Activated CD4-positive, alpha-beta memory T cell treated with anti-CD3 and anti-CD28 coated beads for 36 hours (primary cell): ENCODE measurements at regions of chr17 and their contacts with region 1.

Region 1: DNA sequence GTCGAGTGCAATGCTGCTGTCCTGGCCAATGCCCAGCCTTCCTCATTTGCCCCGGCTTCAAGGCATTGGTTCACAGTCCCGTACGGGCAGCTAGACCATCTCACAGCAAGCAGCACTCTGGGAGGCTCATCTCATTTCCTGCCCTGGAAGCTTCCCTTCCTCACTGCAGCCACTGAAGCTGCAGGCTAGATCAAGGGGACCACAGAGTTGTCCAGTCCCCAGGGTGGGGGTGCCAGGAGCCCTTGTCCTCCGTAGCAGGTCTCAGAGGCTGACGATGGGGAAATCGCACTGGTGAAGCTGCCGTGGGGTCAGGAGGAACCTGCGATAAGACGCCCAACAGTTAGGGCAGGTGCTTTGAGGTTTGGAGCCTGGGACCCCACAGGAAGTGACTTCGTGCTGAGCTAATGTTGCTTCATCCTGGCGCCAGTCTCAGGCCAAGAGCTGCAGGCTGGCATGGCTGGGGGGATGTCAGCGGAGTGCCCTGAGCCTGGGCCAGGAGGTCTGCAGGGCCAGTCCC is at the start of gene SPNS3:
- DNase-seq: peak; percentile 55
- H3K4me3 Mint-ChIP-seq: peak within 1 kb of the TSS; percentile 67
- H3K27ac Mint-ChIP-seq: peak within 1 kb of the TSS; percentile 34
- H3K4me1 Mint-ChIP-seq: peaks cover 19% of the 10 kb centered on the region
- H3K27me3 Mint-ChIP-seq: no peaks in the 10 kb centered on the region
- total RNA-seq, gene SPNS3: 6.6 to 6.7 TPM

Region 2: GRCh38 chr17:4499431-4500187 is 66.0 kb after region 1 on chr17:
- CTCF ChIA-PET with region 1: interaction called, 3 read pairs
- POLR2A ChIA-PET with region 1: no interaction called
- intact Hi-C with region 1: loop called (anchors 10 kb)
- DNase-seq: no peak
- H3K4me3 Mint-ChIP-seq: peak overlapping the region; percentile 65
- H3K27ac Mint-ChIP-seq: no peak overlapping the region
- H3K4me1 Mint-ChIP-seq: peaks cover 19% of the 10 kb centered on the region
- H3K27me3 Mint-ChIP-seq: peaks cover 34% of the 10 kb centered on the region

Region 3: DNA sequence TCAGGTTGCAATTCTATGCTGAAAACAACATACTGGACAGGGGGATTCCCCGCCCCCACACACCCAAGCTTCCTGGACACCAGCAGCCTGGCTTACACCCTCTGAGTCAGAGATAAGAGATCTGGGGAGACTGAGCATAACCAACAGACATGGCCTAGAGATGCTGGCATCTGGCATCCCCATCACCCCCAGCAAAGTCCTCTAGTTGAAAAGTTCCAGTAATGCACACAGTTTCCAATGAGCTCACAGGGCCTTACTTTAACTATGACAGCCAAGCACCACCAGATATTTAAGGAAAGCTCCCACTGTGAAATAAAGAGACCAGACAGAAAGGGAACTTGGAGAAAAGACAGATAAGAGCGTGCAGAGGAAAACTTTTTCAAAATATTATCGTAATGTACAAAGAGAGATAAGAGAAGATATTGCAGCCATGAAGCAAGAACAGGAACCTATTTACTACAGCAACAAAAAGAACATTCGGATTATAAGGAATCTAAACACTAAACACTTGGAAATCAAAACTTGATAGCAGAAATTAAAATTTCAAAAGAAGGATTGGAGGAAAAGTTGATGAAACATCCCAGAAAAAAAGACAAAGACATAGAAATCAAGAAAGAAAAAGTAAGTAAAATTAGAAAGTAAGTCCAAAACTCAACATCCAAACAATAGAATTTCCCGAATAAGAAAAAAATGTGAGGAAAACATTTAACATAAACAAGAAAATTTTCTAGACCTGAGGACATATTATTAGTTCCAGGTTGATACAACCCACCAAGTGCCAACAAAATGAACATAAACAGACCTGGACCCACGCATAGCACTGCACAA is 225.1 kb after region 1 on chr17:
- CTCF ChIA-PET with region 1: no interaction called
- POLR2A ChIA-PET with region 1: no interaction called
- intact Hi-C with region 1: no loop called
- DNase-seq: peak; percentile 83
- H3K4me3 Mint-ChIP-seq: no peak overlapping the region
- H3K27ac Mint-ChIP-seq: no peak overlapping the region
- H3K4me1 Mint-ChIP-seq: peaks cover 12% of the 10 kb centered on the region
- H3K27me3 Mint-ChIP-seq: peaks cover 11% of the 10 kb centered on the region